Right ventricle myocardium inferior (tissue), 1 donor: ENCODE measurements at regions of chr10 and their contacts with region 1.

Region 1: GRCh38 chr10:106571192-106571946 is 593.1 kb downstream of the SORCS1 start:
- DNase-seq: no peak
- ATAC-seq: no peak

Region 2: GRCh38 chr10:105950410-105950809 is 621.0 kb before region 1 on chr10:
- intact Hi-C with region 1: loop called (anchors 10 kb)
- DNase-seq: peak; percentile 62
- ATAC-seq: peak; percentile 57

Region 3: DNA sequence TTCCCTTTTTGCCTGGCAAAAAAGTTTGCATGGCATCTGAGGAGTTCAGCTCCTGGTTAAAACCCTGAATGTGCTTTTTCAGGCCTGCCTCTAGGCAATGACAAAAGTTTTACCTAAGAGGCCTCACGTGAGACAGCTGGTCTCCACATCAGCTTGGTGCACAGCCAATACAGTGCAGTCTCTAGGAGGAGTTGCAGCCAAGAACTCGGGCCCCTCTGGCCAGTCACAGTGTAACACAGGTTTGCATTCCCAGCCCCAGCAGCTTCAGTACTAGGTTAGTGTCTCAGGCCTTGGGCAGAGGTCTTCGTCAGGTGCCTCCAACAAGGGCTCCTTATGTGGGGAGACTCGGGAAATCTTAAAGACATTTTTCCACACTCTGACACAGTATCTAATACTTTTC is 178.6 kb before region 1 on chr10:
- intact Hi-C with region 1: loop called (anchors 10 kb)
- DNase-seq: no peak
- ATAC-seq: peak; percentile 38

Region 4: GRCh38 chr10:106705681-106706100 is 134.3 kb after region 1 on chr10:
- intact Hi-C with region 1: no loop called
- DNase-seq: no peak
- ATAC-seq: peak; percentile 64

Region 5: GRCh38 chr10:106866244-106866845 is 295.0 kb after region 1 on chr10:
- intact Hi-C with region 1: no loop called
- DNase-seq: no peak
- ATAC-seq: no peak